ENCODE measurements at regions of chr2 and their contacts with region 1.

Region 1: GRCh38 chr2:196076778-196077568 is 8.3 kb upstream of the DNAH7 start:
- H3K4me3 Mint-ChIP-seq: no peak overlapping the region
- H3K27ac Mint-ChIP-seq: no peak overlapping the region
- H3K4me1 Mint-ChIP-seq: peaks cover 10% of the 10 kb centered on the region
- H3K27me3 Mint-ChIP-seq: no peaks in the 10 kb centered on the region

Region 2: DNA sequence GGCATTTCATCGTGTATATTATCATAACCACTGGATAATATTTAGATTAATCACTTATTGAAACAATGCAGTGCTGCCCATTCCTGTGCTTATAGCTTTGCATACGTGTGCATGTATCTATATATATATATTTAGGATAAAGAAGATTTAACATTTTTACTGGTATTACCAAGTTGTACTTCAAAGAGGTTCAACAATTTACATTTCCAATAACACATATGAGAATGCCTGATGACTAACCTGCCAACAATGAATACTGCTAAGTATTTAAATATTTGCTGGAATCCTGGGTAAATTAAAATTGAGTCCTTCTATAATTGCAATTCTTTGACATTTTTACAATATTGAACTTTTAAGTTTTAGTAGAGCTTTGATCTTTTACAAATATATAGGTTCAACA is 308.5 kb before region 1 on chr2:
- intact Hi-C with region 1: no loop called
- H3K4me3 Mint-ChIP-seq: no peak overlapping the region
- H3K27ac Mint-ChIP-seq: no peak overlapping the region
- H3K4me1 Mint-ChIP-seq: no peaks in the 10 kb centered on the region
- H3K27me3 Mint-ChIP-seq: no peaks in the 10 kb centered on the region

Region 3: DNA sequence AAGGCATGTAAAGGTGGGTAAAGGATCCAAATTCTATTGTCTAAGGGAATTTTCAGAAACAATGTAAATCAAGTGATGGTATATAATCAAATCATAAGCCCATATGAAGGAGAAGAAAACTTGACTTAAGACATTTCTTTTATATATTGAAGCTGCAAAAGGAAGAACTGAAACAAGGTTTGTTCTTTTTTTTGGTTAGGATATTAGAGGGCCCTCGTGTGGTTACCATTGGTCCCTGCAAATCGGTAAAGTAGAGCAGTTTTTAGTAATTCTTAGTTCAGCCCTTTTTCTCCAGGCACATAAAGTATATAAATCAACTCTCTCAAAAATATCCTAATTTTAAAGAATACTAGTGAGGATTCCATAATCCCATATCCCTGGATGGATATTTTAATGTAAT is 200.0 kb after region 1 on chr2:
- intact Hi-C with region 1: loop called (anchors 5 kb)
- H3K4me3 Mint-ChIP-seq: no peak overlapping the region
- H3K27ac Mint-ChIP-seq: no peak overlapping the region
- H3K4me1 Mint-ChIP-seq: peaks cover 25% of the 10 kb centered on the region
- H3K27me3 Mint-ChIP-seq: peaks cover 2% of the 10 kb centered on the region

Region 4: GRCh38 chr2:196291873-196292800 is 215.2 kb after region 1 on chr2:
- intact Hi-C with region 1: loop called (anchors 5 kb)
- H3K4me3 Mint-ChIP-seq: no peak overlapping the region
- H3K27ac Mint-ChIP-seq: no peak overlapping the region
- H3K4me1 Mint-ChIP-seq: peaks cover 18% of the 10 kb centered on the region
- H3K27me3 Mint-ChIP-seq: no peaks in the 10 kb centered on the region

Region 5: GRCh38 chr2:196337208-196337953 is 260.4 kb after region 1 on chr2:
- intact Hi-C with region 1: loop called (anchors 1 kb)
- H3K4me3 Mint-ChIP-seq: no peak overlapping the region
- H3K27ac Mint-ChIP-seq: no peak overlapping the region
- H3K4me1 Mint-ChIP-seq: peaks cover 6% of the 10 kb centered on the region
- H3K27me3 Mint-ChIP-seq: no peaks in the 10 kb centered on the region

Region 6: GRCh38 chr2:196453613-196454047 is 376.7 kb after region 1 on chr2:
- intact Hi-C with region 1: loop called (anchors 5 kb)
- H3K4me3 Mint-ChIP-seq: no peak overlapping the region
- H3K27ac Mint-ChIP-seq: no peak overlapping the region
- H3K4me1 Mint-ChIP-seq: no peaks in the 10 kb centered on the region
- H3K27me3 Mint-ChIP-seq: peaks cover 8% of the 10 kb centered on the region